OCI-LY7 (cell line): ENCODE measurements at regions of chr17 and their contacts with region 1.

Region 1: GRCh38 chr17:68778726-68779125 is 176.5 kb downstream of the ABCA8 start:
- DNase-seq: no peak
- H3K4me3 ChIP-seq: no peak overlapping the region
- H3K27ac ChIP-seq: no peak overlapping the region
- H3K4me1 ChIP-seq: peaks cover 18% of the 10 kb centered on the region
- CTCF ChIP-seq: no peak

Region 2: GRCh38 chr17:68674029-68674940 is 104.4 kb before region 1 on chr17:
- CTCF ChIA-PET with region 1: no interaction called
- POLR2A ChIA-PET with region 1: no interaction called
- intact Hi-C with region 1: no loop called
- DNase-seq: no peak
- H3K4me3 ChIP-seq: no peak overlapping the region
- H3K27ac ChIP-seq: no peak overlapping the region
- H3K4me1 ChIP-seq: no peaks in the 10 kb centered on the region
- CTCF ChIP-seq: no peak

Region 3: DNA sequence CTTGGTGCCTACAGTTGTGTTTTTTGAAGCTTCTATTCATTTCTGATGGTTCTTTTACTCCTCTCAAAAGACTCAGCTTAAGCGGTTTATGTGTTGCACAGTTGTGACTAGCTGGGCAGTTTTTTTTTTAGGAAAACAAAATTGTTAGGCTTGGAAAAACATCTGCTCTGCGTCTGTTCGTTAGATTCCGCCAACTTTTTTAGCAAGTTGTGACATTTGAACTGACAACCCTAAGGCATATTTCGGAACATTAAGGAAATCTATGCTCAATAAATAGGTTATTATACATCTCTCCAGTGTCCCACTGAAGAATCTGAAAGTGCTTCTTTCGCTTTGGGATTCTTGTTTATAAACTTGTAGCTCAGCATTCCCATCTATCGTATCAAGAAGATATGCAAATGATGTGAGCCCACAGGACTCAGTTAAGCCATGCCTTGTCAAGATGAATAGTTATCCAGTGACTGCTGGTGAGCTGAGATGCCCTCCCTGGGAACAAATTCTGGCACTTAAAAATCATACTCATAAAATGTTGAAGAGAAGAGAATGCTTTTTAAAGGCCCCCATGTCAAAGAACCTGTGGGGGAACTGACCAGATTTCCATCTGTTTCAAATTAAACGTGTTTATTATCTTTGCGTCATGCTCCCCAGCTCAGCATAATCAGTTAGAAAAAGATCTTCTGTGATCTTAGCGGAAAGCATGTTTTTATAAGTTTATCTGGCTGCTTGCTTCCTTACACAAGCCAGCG is 68.5 kb before region 1 on chr17:
- CTCF ChIA-PET with region 1: no interaction called
- POLR2A ChIA-PET with region 1: interaction called, 10 read pairs
- intact Hi-C with region 1: no loop called
- DNase-seq: no peak
- H3K4me3 ChIP-seq: no peak overlapping the region
- H3K27ac ChIP-seq: no peak overlapping the region
- H3K4me1 ChIP-seq: no peaks in the 10 kb centered on the region
- CTCF ChIP-seq: no peak

Region 4: DNA sequence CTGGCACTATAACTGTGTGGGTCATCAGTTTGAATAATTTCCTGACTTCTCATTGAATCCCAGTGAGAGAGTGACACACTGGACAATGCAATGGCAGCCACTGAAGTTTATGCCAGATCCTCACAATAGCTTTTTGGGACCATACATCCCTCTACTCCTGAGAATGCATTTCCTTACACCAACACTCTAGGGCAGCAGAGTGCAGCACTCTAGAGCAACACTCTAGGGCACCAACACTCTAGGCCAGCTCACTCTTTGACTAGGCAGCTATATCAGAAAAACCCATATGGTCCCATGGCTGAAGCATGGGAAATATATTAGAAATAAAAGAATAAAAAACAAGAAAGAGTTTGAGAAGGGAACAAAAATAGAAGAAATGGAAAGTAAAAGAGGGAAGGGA is 945.0 kb after region 1 on chr17:
- CTCF ChIA-PET with region 1: no interaction called
- POLR2A ChIA-PET with region 1: no interaction called
- intact Hi-C with region 1: no loop called
- DNase-seq: no peak
- H3K4me3 ChIP-seq: no peak overlapping the region
- H3K27ac ChIP-seq: no peak overlapping the region
- H3K4me1 ChIP-seq: no peaks in the 10 kb centered on the region
- CTCF ChIP-seq: peak; percentile 31; the same call in 1 of the 2 replicates